Colonic mucosa (tissue), 4 donors: ENCODE measurements at regions of chr5 and their contacts with region 1.

Region 1: GRCh38 chr5:112921833-112922817 is at the start of gene REEP5:
- DNase-seq: peak; percentile 81
- H3K4me3 ChIP-seq: peak within 1 kb of the TSS; percentile 99
- H3K27ac ChIP-seq: peak within 1 kb of the TSS; percentile 99
- H3K4me1 ChIP-seq: peaks cover 5% of the 10 kb centered on the region
- H3K27me3 ChIP-seq: no peaks in the 10 kb centered on the region
- CTCF ChIP-seq: peak; percentile 38
- total RNA-seq, gene REEP5: 76.7 to 96.3 TPM

Region 2: GRCh38 chr5:112860929-112861637 is 61.0 kb before region 1 on chr5 and contains the start of gene SRP19:
- intact Hi-C with region 1: loop called (anchors 5 kb)
- DNase-seq: peak; percentile 95
- H3K4me3 ChIP-seq: peak within 1 kb of the TSS; percentile 89
- H3K27ac ChIP-seq: peak within 1 kb of the TSS; percentile 69
- H3K4me1 ChIP-seq: peaks cover 10% of the 10 kb centered on the region
- H3K27me3 ChIP-seq: peaks cover 5% of the 10 kb centered on the region
- CTCF ChIP-seq: no peak
- total RNA-seq, gene SRP19: 27.0 to 33.2 TPM

Region 3: GRCh38 chr5:112976432-112977309 is 54.5 kb after region 1 on chr5 and contains the start of gene DCP2:
- intact Hi-C with region 1: loop called (anchors 10 kb)
- DNase-seq: peak; percentile 95
- H3K4me3 ChIP-seq: peak within 1 kb of the TSS; percentile 75
- H3K27ac ChIP-seq: peak within 1 kb of the TSS; percentile 93
- H3K4me1 ChIP-seq: peaks cover 7% of the 10 kb centered on the region
- H3K27me3 ChIP-seq: no peaks in the 10 kb centered on the region
- CTCF ChIP-seq: no peak
- total RNA-seq, gene DCP2: 39.5 to 48.2 TPM